Activated CD4-positive, alpha-beta T cell treated with anti-CD3 and anti-CD28 coated beads for 36 hours (primary cell): ENCODE measurements at regions of chrX and their contacts with region 1.

Region 1: DNA sequence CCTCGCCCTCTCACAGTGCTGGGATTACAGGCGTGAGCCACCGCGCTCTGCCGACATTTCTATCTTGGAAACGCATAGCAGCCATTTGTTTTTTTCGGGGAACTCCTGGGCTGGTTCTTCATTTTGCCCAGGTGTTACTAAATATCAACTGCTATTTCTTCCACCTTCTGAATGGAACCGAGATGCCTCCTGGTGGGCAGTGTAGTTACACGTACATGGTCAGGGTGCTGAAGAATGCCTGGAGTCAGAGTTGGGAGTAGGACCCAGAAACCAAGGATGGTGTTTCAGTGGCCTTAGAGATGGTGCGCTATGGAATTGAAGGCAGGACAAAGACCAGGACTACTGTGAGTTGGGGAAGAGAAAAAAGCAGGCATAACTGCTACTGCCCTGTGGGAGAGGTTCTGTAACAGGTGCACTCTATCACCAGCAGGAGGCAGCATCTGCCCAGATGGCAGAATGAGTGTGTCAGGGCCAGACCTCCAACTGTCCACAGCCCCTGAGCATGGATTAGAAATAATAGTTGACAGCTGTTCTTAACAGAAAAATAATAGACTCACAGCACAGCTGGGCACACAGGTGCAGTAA is 81.7 kb downstream of the ZC4H2 start:
- DNase-seq: peak; percentile 64
- ATAC-seq: peak; percentile 68
- H3K4me3 Mint-ChIP-seq: no peak overlapping the region
- H3K27ac Mint-ChIP-seq: no peak overlapping the region
- H3K4me1 Mint-ChIP-seq: peaks cover 2% of the 10 kb centered on the region
- H3K27me3 Mint-ChIP-seq: no peaks in the 10 kb centered on the region

Region 2: DNA sequence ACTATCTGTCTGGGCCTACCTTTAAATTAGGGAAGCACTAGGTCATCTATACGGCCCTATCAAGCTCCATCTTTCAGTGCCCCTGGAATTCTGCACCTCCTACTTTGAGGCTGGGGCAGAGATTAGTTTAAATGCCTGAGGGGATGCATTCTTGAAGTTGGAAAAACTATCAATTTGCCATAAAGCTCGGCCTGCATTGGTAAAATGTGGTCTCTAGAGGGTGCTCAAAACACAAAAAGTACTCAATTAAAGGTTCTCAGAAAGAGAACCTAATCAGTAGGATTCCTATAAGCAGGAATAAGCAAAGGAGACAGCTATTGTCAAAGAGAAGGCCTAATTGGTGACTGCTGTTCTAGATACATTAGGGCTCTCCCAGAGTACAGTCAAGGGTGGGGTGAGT is 800.8 kb before region 1 on chrX:
- CTCF ChIA-PET with region 1: no interaction called
- POLR2A ChIA-PET with region 1: no interaction called
- intact Hi-C with region 1: loop called in 1 of 2 experiments (anchors 5 kb)
- DNase-seq: no peak
- ATAC-seq: no peak
- H3K4me3 Mint-ChIP-seq: no peak overlapping the region
- H3K27ac Mint-ChIP-seq: no peak overlapping the region
- H3K4me1 Mint-ChIP-seq: no peaks in the 10 kb centered on the region
- H3K27me3 Mint-ChIP-seq: no peaks in the 10 kb centered on the region

Region 3: DNA sequence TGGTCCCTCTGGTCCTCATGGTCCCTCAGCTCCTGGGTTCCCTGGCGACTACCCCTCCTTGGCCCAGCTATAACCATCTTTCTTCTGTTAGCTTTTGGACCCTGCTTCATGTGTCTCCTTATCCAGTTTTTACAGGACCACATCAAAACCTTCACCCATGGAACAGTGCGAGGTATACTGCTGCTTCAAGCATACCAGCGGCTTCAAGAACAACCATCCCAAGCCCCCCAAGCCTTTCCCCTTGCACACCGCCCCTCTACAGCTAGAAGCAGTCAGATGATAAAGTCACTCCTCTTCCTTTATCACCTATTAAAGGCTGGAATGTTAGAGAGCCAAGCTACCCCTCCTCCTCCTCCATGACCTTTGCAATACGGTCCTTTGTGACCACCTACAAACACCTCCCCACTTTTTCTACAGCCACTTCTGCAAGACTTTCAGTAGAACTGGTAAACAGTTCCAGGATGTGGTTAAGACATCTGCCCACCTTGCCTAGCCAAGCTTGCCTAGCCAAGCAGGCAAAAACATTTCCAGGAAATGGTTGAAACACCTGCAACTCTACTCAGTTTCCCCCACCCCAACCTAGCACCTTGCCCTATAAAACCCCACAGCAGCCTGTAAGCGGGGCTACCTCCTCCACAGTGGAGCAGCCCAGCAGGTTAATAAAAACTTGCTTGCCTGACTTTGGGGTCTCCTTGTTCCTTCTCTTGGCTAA is 44.0 kb before region 1 on chrX:
- CTCF ChIA-PET with region 1: no interaction called
- POLR2A ChIA-PET with region 1: no interaction called
- intact Hi-C with region 1: no loop called
- DNase-seq: peak; percentile 12
- ATAC-seq: peak; percentile 47
- H3K4me3 Mint-ChIP-seq: no peak overlapping the region
- H3K27ac Mint-ChIP-seq: no peak overlapping the region
- H3K4me1 Mint-ChIP-seq: peaks cover 13% of the 10 kb centered on the region
- H3K27me3 Mint-ChIP-seq: no peaks in the 10 kb centered on the region

Region 4: DNA sequence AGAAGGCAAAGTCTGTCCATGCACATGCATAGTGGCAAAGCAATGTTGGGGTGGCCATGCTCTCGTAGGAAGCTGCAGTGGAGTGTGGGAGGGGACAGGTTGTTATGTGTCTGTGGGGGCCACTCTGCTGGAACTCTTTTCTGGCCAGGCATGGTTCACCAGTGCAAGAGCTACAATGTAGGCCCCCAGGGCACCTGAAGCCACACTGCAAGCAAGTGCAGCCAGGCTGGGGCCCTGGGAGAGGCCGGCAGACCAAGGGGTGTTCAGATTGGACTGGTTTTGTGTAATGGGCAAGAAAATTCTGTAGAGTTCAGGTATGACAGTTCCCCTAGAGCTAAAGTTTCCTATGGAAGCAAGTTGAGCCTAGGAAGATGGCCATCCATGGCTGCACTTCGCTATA is 178.7 kb after region 1 on chrX:
- CTCF ChIA-PET with region 1: no interaction called
- POLR2A ChIA-PET with region 1: no interaction called
- intact Hi-C with region 1: no loop called
- DNase-seq: no peak
- ATAC-seq: no peak
- H3K4me3 Mint-ChIP-seq: no peak overlapping the region
- H3K27ac Mint-ChIP-seq: no peak overlapping the region
- H3K4me1 Mint-ChIP-seq: no peaks in the 10 kb centered on the region
- H3K27me3 Mint-ChIP-seq: no peaks in the 10 kb centered on the region

Region 5: GRCh38 chrX:65451663-65452062 is 557.1 kb after region 1 on chrX:
- CTCF ChIA-PET with region 1: no interaction called
- POLR2A ChIA-PET with region 1: no interaction called
- intact Hi-C with region 1: loop called (anchors 1 to 2 kb)
- DNase-seq: peak; percentile 14
- ATAC-seq: no peak
- H3K4me3 Mint-ChIP-seq: no peak overlapping the region
- H3K27ac Mint-ChIP-seq: no peak overlapping the region
- H3K4me1 Mint-ChIP-seq: no peaks in the 10 kb centered on the region
- H3K27me3 Mint-ChIP-seq: no peaks in the 10 kb centered on the region

Region 6: DNA sequence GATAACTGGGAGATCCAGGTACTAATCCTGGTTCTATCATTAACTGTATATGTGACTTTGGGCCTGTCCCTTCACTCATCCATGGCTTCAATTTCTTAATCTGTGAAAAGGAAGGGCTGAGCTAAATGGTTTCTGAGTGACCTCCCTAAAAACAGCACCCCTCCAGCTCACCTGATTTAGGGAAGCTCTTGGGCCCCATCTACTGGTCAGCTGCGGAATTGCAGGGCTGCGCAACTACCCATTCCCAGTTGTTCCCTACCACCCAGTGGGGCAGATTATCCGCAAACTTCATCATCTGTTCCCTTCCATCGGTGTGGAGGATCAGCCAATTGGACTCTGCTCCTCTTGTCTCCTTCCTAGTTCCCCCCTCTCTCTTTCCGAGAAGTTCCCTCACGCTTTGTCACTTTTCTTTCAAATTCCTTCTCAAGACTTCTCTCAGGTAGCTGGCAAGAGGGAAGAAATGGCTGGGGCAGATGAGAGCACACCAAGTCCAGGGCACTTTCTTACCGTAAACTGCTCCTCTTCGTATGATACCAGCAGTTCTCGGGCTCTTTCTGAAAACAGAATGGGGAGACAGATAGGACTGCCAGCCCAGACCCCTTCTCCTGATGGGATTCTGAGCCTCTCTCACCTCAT is 634.3 kb after region 1 on chrX:
- CTCF ChIA-PET with region 1: interaction called, 3 read pairs
- POLR2A ChIA-PET with region 1: no interaction called
- intact Hi-C with region 1: loop called in 1 of 2 experiments (anchors 2 kb)
- DNase-seq: peak; percentile 65
- ATAC-seq: no peak
- H3K4me3 Mint-ChIP-seq: no peak overlapping the region
- H3K27ac Mint-ChIP-seq: no peak overlapping the region
- H3K4me1 Mint-ChIP-seq: peaks cover 19% of the 10 kb centered on the region
- H3K27me3 Mint-ChIP-seq: no peaks in the 10 kb centered on the region